ENCODE measurements at regions of chr1 and their contacts with region 1.

Region 1: GRCh38 chr1:67853704-67854103 is 20.4 kb upstream of the GNG12 start:
- DNase-seq: no peak
- H3K4me3 ChIP-seq: no peak overlapping the region
- CTCF ChIP-seq: peak; percentile 94

Region 2: GRCh38 chr1:67041841-67042503 is 811.7 kb before region 1 on chr1:
- CTCF ChIA-PET with region 1: no interaction called
- POLR2A ChIA-PET with region 1: no interaction called
- DNase-seq: no peak
- H3K4me3 ChIP-seq: no peak overlapping the region
- CTCF ChIP-seq: no peak

Region 3: DNA sequence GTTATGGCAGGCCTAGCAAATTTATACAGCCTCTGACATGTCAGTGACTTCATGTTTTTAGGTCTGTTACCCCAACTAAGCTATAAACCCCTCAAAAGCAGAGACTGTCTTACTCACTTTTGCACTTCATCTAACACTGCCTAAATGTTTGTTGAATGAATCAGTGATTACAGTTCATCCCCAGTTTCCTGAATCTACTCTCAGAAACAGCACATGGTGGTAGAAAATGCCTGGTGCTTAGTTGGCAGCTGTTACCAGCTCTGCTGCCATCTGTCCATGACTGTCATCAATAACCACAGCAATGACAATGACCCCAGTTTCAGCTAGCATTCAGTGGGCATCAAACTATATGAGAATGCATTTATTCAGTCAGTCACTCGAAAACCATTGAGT is 313.0 kb before region 1 on chr1:
- CTCF ChIA-PET with region 1: interaction called, 13 read pairs
- POLR2A ChIA-PET with region 1: no interaction called
- DNase-seq: no peak
- H3K4me3 ChIP-seq: no peak overlapping the region
- CTCF ChIP-seq: no peak

Region 4: DNA sequence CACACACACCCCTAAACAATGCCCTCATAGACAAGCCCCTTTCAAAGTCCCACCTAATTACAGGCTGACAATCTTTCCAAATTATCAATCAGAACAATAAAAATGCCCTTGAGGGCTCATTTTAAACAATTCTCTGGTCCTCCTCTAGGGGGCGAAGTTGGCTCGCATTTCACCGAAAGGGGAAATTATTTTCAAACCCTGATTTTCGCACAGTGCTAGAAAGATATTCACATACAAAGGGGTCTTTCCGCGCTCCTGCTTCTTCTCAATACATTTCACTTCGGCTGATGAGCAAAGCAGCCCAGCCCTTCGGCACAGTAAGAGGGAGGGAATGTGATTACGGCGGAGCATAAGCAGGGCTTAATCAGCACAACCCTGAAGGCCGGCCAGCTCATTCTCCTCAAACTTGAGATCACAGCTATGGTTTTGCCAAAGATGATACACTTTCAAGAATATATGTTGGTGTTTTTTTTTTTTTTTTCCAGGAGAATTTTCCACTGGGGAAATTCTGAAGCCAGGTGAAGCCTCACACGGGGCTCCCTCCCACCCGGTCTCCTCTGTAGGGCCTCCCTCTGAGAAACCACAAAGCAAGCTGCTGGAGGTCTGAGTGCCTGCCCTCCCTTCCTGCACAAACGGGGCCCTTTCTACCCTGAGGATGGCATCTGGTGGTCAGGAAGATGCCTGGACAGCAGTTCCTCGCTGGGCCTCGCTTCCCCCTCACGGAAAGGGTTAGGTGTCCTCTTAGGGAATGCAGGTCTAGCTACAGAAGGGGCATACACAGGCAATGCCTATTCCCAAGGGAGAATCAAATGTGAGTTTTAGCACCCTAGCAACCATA is 87.3 kb before region 1 on chr1:
- CTCF ChIA-PET with region 1: interaction called, 96 read pairs
- POLR2A ChIA-PET with region 1: no interaction called
- DNase-seq: peak; percentile 64
- H3K4me3 ChIP-seq: peak overlapping the region; percentile 38
- CTCF ChIP-seq: peak; percentile 42

Region 5: GRCh38 chr1:67832737-67833601 is 20.7 kb before region 1 on chr1 and contains the start of gene GNG12:
- CTCF ChIA-PET with region 1: interaction called, 21 read pairs
- POLR2A ChIA-PET with region 1: no interaction called
- DNase-seq: no peak
- H3K4me3 ChIP-seq: peak within 1 kb of the TSS; percentile 80
- CTCF ChIP-seq: no peak

Region 6: GRCh38 chr1:68010090-68010489 is 156.4 kb after region 1 on chr1:
- CTCF ChIA-PET with region 1: interaction called, 211 read pairs
- POLR2A ChIA-PET with region 1: no interaction called
- DNase-seq: no peak
- H3K4me3 ChIP-seq: no peak overlapping the region
- CTCF ChIP-seq: peak; percentile 24

Region 7: DNA sequence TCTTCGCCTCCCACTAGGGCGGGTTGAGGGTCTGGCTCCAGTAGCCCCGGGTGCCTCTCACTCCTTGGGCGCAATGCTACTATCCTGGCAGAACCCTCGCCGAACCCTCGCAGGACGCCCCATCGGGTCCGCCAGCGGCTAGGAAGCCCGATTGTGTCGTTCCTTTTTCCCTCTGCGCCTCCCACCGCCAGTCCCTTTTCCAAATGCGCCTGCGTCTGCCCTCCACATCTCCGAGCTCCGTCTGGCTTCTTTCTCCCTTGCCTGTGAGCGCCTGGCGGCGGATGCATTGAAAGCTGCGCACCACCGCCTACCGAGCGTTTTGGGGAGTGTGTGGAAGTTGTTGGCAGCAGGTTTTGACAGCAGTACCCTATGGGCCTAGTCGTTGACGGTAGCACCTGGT is 197.8 kb after region 1 on chr1:
- CTCF ChIA-PET with region 1: interaction called, 48 read pairs
- POLR2A ChIA-PET with region 1: no interaction called
- DNase-seq: no peak
- H3K4me3 ChIP-seq: peak overlapping the region; percentile 59
- CTCF ChIP-seq: peak; percentile 62

Region 8: DNA sequence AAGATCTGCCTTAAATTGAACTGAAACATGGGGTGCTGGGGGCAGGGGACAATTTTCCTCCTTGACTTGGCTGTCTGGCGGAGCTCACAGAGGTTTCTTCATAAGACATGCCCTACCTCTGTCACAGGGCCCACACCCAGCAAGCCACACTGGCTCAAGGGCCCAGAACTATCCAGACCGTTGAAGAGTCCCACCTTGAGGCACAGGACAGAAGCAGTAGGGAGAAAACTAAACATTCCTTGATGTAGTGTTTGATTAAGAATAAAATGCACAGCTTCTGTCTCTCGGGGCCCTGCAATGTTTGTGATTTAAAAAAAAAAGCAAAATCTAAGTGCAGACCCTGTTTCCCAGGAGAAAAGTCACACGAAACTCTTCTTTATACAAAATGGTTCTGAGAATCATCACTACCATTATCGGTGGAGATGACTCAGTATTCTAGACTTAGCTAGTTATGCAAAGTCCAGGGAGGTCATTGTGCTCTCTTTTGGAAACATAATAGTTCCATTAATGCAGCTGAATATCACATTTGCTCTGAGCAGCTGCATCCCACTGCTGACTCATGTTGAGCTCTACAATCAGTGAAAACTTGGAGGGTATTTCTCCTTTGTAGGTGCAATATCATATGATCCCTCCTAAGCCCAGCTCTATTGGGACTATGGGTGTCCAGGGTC is 250.3 kb after region 1 on chr1:
- CTCF ChIA-PET with region 1: interaction called, 383 read pairs
- POLR2A ChIA-PET with region 1: no interaction called
- DNase-seq: no peak
- H3K4me3 ChIP-seq: no peak overlapping the region
- CTCF ChIP-seq: no peak

Region 9: GRCh38 chr1:69148731-69149130 is 1295.0 kb after region 1 on chr1:
- CTCF ChIA-PET with region 1: no interaction called
- POLR2A ChIA-PET with region 1: no interaction called
- DNase-seq: no peak
- H3K4me3 ChIP-seq: no peak overlapping the region
- CTCF ChIP-seq: no peak